Activated CD4-positive, alpha-beta T cell treated with anti-CD3 and anti-CD28 coated beads, Interleukin-2, amount 10 ng/mL, durations not matched to agents 24 days and 14 days (primary cell): ENCODE measurements at regions of chr16 and their contacts with region 1.

Region 1: DNA sequence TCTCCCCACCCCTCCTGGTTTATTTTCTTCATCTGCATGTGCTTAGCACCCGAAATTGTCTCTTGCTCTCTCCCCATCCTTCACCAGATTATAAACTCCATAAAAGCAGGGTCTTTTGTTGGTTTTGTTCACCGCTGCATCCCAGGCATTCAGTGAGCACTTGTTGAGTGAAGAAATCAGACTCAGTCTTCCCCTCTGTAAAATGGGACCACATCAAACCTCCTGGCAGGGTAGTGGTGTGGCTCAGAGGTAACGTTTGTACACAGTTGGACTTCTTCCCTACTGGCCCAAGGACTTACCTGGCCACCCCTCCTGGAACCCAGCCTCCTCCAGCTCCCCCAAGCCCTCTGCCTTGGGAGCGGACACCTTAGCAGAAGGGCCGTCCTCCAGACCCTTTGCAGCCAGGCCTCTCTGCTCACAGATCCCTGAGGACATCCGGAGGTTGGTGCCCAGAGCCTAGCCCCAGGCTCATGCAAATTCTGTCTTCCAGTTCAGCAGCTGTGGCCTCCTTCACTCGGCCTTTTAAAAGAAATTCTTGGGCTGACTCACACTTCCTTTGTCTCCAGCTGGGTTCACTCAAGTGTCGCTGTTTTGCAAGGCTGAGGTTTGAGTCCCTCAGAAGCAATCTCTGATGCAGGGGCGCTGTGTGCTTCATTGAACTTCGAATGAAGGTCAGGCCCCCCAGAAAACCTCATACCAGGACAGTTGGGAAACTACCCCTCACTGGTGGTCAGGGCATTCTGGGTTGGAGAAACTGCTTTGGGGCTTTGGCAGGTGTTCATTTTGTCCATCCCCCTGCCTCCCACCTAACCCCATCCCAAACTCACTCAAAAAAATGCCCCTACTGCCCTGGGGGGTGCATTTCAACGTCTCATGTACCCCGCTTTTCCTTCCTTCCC is 16.8 kb upstream of the RMI2 start:
- DNase-seq: peak; percentile 88
- H3K4me3 Mint-ChIP-seq: peak overlapping the region; percentile 70
- H3K27ac Mint-ChIP-seq: peak overlapping the region; percentile 77
- H3K4me1 Mint-ChIP-seq: peaks cover 55% of the 10 kb centered on the region
- H3K27me3 Mint-ChIP-seq: no peaks in the 10 kb centered on the region

Region 2: DNA sequence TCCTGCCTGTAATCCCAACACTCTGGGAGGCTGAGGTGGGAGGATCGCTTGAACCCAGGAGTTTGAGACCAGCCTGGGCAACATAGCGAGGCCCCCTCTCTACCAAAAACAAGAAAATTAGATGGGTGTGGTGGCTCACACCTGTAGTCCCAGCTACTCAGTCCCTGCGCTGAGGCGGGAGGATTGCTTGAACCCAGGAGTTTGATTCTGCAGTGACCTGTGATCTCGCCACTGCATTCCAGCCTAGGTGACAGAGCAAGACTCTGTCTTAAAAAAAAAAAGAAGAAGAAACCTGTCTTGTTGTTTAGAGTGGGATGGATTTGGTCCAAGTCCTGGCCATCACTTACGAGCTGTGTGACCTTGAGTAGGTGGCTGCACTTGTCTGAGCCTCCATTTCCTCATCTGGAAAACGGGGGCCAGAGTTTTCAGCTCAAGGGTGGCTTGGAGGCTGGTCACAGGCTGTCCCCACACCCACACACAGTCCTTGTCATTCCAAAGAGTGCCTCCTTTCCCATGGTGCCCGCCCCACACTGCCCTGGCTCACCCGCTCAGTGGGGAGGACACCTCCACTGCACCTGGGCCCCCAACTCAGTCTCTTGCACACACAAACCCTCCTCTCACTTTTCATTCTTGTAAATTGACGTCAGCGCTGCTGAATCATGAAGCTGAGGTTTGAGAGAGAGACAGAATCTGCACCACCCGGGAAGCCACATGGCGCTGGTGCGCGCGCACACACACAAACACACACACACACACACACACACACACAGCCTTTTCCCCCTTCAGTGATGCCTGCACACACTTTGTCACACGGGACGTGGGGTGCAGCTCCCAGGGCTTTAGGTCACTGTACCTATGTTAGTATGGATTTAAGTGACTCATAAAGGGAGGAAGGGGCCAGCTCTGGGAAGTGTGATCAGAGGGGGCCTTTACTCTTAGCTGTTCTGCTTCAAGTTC is 76.6 kb before region 1 on chr16:
- intact Hi-C with region 1: no loop called
- DNase-seq: peak; percentile 93
- H3K4me3 Mint-ChIP-seq: peak overlapping the region; percentile 97
- H3K27ac Mint-ChIP-seq: peak overlapping the region; percentile 96
- H3K4me1 Mint-ChIP-seq: peaks cover 41% of the 10 kb centered on the region
- H3K27me3 Mint-ChIP-seq: no peaks in the 10 kb centered on the region

Region 3: GRCh38 chr16:11310997-11311561 is 17.3 kb before region 1 on chr16:
- intact Hi-C with region 1: loop called (anchors 1 kb)
- DNase-seq: peak; percentile 91
- H3K4me3 Mint-ChIP-seq: peak overlapping the region; percentile 58
- H3K27ac Mint-ChIP-seq: peak overlapping the region; percentile 85
- H3K4me1 Mint-ChIP-seq: peaks cover 57% of the 10 kb centered on the region
- H3K27me3 Mint-ChIP-seq: no peaks in the 10 kb centered on the region

Region 4: GRCh38 chr16:11345040-11345862 is 16.8 kb after region 1 on chr16 and contains the start of gene RMI2:
- intact Hi-C with region 1: loop called (anchors 1 kb)
- DNase-seq: peak; percentile 99
- H3K4me3 Mint-ChIP-seq: peak within 1 kb of the TSS; percentile 90
- H3K27ac Mint-ChIP-seq: peak within 1 kb of the TSS; percentile 89
- H3K4me1 Mint-ChIP-seq: peaks cover 48% of the 10 kb centered on the region
- H3K27me3 Mint-ChIP-seq: no peaks in the 10 kb centered on the region
- total RNA-seq, gene RMI2: 63.8 and 65.6 TPM in 2 replicates

Region 5: DNA sequence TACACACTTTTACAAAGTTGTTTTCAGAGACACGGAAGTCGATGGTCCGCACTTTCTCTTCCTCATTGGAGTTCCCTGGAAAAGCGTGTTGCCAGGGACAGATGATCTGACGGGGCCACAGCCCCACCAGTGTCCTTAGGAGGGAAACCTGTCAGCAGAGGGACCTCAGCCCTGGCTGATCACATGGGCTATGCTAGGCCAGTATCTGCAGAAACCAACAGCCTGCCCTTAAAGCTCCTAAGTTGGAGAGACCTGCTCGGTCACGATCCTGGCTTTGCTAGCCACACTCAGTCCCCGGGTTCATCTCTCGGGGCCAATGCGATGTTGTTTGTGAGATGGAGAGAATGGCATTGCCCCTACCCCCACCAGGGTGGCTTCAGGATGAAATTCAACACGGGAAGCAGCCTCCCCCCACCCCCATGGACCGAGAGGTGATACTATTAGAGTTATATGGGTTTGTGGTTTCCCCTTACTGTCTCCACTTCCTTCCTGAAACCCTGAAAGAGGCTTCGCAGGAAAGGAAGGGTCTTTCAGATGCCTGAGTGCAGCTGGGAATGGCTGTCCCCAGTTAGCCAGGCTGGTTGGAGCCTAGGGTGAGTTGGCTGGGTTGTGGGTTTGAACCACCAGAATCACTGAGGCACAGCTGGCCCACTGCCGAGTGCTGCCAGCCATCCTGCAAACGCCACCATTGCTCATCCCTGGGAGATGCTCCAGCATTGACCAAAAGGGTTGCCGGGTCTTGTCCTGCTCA is 33.5 kb after region 1 on chr16:
- intact Hi-C with region 1: loop called (anchors 5 kb)
- DNase-seq: peak; percentile 80
- H3K4me3 Mint-ChIP-seq: peak overlapping the region; percentile 80
- H3K27ac Mint-ChIP-seq: peak overlapping the region; percentile 68
- H3K4me1 Mint-ChIP-seq: peaks cover 50% of the 10 kb centered on the region
- H3K27me3 Mint-ChIP-seq: peaks cover 15% of the 10 kb centered on the region

Region 6: DNA sequence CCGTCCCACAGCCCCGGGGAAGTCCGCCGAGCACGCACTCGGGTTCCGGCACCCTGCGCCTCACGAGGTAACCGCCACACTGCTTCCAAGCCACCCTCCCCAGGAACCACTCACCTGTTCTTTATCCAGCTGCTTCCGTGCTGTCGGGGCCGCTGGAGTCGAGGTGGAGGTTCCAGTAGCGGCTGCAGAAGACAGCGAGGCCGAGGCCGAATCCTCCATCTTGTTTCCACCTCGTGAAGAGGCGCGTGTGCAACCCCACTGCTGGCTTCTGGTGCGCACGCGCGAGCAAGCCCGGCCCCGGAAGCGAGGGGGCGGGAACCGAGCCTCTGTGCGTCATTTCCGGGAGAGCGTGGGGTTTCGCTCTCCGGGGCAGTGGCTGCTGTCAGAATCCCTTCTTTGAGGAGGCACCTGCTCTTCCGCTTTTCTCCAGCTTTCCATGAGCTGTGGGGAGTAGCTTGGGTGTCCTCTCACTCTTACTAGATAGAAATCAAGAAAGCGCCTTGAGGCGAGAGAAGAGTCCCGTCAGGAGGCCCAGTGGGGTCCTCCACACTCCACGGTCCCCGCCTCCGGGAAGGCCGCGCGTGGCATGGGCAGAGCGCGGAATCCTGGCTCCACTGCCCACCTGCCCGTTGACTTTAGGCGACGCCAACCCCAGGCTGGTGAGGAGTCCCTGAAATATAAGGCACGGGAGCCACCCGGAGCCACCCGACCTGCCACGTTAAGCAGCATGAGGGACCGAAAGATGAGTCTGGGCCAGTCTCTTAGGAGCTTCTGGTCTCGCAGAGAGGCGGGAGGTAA is 523.1 kb after region 1 on chr16 and contains the start of gene RSL1D1:
- intact Hi-C with region 1: no loop called
- DNase-seq: peak; percentile 99
- H3K4me3 Mint-ChIP-seq: peak within 1 kb of the TSS; percentile 99
- H3K27ac Mint-ChIP-seq: peak within 1 kb of the TSS; percentile 98
- H3K4me1 Mint-ChIP-seq: peaks cover 47% of the 10 kb centered on the region
- H3K27me3 Mint-ChIP-seq: no peaks in the 10 kb centered on the region
- total RNA-seq, gene RSL1D1: 375 and 379 TPM in 2 replicates